IMR-90 (cell line): ENCODE measurements at regions of chr15 and their contacts with region 1.

Region 1: DNA sequence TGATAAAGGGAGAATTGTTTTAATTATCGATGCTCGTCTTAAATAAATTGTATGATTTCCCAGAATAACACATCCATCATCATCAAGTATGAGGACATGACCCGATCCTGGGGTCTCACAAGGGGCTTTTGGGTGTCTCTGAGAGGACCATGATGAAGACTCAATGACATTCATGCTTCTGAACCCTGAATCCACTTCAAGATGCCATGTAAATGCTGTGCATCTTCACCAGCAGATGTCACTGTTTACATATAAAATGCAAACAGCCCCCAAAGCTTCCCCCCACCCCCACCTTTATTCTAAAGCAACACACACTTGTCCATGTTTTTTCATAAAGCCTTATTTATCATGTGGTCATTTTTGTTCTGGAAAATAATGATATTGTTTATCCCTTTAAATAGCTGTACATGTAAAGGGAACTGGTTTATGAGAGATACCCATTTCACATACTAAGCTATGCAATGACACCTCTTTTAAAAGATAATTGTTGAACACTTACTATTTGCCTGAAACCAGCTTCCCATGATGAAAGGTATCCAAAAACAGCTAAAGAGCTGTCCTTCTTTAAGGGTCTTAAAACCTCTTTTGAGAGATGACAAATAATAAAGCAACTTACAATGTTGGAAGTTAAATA is 69.7 kb upstream of the UBE3A start:
- DNase-seq: peak; percentile 64
- ATAC-seq: peak; percentile 65; the same call in 1 of the 2 replicates
- H3K4me3 ChIP-seq: no peak overlapping the region
- H3K27ac ChIP-seq: no peak overlapping the region
- H3K4me1 ChIP-seq: peaks cover 3% of the 10 kb centered on the region; the same call in 1 of the 2 replicates
- H3K27me3 ChIP-seq: no peaks in the 10 kb centered on the region
- CTCF ChIP-seq: peak; percentile 86
- POLR2A ChIP-seq: 0 out of 2 replicates have a peak, but pooled peaks have one; percentile 32
- RAD21 ChIP-seq: peak; percentile 92

Region 2: GRCh38 chr15:25635191-25635590 is 126.7 kb after region 1 on chr15:
- CTCF ChIA-PET with region 1: no interaction called
- POLR2A ChIA-PET with region 1: no interaction called
- dilution Hi-C with region 1: no loop called
- in situ Hi-C with region 1: no loop called
- intact Hi-C with region 1: no loop called
- DNase-seq: no peak
- ATAC-seq: 0 out of 2 replicates have a peak, but pooled peaks have one; percentile 44
- H3K4me3 ChIP-seq: no peak overlapping the region
- H3K27ac ChIP-seq: no peak overlapping the region
- H3K4me1 ChIP-seq: no peaks in the 10 kb centered on the region
- H3K27me3 ChIP-seq: no peaks in the 10 kb centered on the region; the same call in 1 of the 2 replicates
- CTCF ChIP-seq: no peak
- POLR2A ChIP-seq: no peak
- RAD21 ChIP-seq: no peak

Region 3: GRCh38 chr15:25693321-25694237 is 185.1 kb after region 1 on chr15:
- CTCF ChIA-PET with region 1: interaction called, 3 read pairs
- POLR2A ChIA-PET with region 1: no interaction called
- dilution Hi-C with region 1: no loop called
- in situ Hi-C with region 1: no loop called
- intact Hi-C with region 1: loop called (anchors 2 kb)
- DNase-seq: peak; percentile 24
- ATAC-seq: peak; percentile 90
- H3K4me3 ChIP-seq: no peak overlapping the region
- H3K27ac ChIP-seq: no peak overlapping the region
- H3K4me1 ChIP-seq: peaks cover 4% of the 10 kb centered on the region
- H3K27me3 ChIP-seq: no peaks in the 10 kb centered on the region
- CTCF ChIP-seq: peak; percentile 62
- POLR2A ChIP-seq: no peak
- RAD21 ChIP-seq: peak; percentile 70

Region 4: DNA sequence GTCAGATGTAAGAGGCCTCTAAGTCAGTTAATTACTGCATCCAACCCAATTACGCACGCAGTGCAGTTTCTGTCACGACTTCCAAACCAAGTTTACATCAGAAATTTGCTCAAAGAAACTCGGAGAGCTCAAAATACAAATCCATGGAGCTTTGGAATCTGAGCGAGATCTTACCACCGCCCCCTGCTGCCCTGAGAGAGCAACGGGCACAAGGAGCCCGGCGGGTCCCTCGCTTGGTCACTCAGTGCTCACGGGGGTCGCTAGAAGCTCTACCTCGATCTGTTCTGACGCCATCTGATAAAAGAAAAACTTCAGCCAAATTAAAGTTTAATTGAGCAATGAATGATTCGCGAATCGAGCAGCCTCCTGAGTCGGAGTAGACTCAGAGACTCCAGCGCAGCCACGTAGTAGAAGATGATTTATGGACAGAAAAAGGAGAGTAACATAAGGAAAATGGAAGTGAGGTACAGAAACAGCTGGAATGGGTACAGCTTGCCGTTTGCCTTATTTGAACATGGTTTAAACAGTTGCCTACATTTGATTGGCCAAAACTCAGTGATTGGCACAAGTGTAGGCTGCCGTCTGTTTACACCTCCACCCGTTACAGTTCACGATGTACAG is 587.3 kb after region 1 on chr15:
- CTCF ChIA-PET with region 1: no interaction called
- POLR2A ChIA-PET with region 1: no interaction called
- dilution Hi-C with region 1: no loop called
- in situ Hi-C with region 1: no loop called
- intact Hi-C with region 1: loop called (anchors 2 kb)
- DNase-seq: no peak
- ATAC-seq: no peak
- H3K4me3 ChIP-seq: no peak overlapping the region
- H3K27ac ChIP-seq: no peak overlapping the region
- H3K4me1 ChIP-seq: no peaks in the 10 kb centered on the region
- H3K27me3 ChIP-seq: no peaks in the 10 kb centered on the region
- CTCF ChIP-seq: 0 out of 2 replicates have a peak, but pooled peaks have one; percentile 23
- POLR2A ChIP-seq: no peak
- RAD21 ChIP-seq: peak; percentile 14; the same call in 1 of the 2 replicates

Region 5: DNA sequence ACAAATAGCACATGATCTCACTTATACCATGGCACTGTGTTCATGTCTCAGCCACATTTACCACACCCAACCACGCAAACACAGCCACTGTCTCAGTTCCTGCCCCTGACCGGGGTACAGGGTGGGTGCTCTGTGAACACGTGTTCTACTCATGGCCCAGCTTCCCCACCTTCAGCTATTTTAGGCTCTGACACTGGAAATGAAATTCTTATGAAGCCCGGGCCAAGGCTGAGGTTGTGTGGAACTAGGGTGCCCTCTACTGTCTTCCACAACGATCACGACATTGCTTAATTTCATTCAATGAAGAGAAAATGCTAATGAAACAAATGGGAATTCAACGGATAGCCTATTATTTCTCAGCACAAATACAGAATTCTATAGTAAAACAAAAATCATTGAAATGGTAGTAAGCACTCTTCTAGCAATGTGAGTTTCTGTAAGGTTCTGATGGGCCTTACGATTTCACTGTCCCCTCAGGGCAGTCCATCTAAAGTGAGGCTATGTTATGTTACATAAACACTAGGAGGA is 1356.2 kb after region 1 on chr15:
- CTCF ChIA-PET with region 1: interaction called, 6 read pairs
- POLR2A ChIA-PET with region 1: no interaction called
- dilution Hi-C with region 1: no loop called
- in situ Hi-C with region 1: loop called (anchors 10 kb)
- intact Hi-C with region 1: loop called (anchors 1 kb)
- DNase-seq: peak; percentile 36
- ATAC-seq: peak; percentile 56
- H3K4me3 ChIP-seq: no peak overlapping the region
- H3K27ac ChIP-seq: no peak overlapping the region
- H3K4me1 ChIP-seq: no peaks in the 10 kb centered on the region
- H3K27me3 ChIP-seq: peaks cover 16% of the 10 kb centered on the region
- CTCF ChIP-seq: peak; percentile 68
- POLR2A ChIP-seq: no peak
- RAD21 ChIP-seq: peak; percentile 83